ENCODE measurements at regions of chr12 and their contacts with region 1.

Region 1: GRCh38 chr12:111685744-111686517 is at the starts of genes ACAD10 and BRAP:
- DNase-seq: peak; percentile 98
- H3K4me3 ChIP-seq: peak within 1 kb of the TSS; percentile 47 to 85 (median 74)
- H3K27ac ChIP-seq: peak within 1 kb of the TSS; percentile 28
- H3K4me1 ChIP-seq: peaks cover 19% of the 10 kb centered on the region
- H3K27me3 ChIP-seq: no peaks in the 10 kb centered on the region
- CTCF ChIP-seq: no peak
- POLR2A ChIP-seq: peak; percentile 97
- total RNA-seq, gene ACAD10: 14.9 and 16.3 TPM in 2 replicates
- total RNA-seq, gene BRAP: 16.5 and 18.6 TPM in 2 replicates

Region 2: DNA sequence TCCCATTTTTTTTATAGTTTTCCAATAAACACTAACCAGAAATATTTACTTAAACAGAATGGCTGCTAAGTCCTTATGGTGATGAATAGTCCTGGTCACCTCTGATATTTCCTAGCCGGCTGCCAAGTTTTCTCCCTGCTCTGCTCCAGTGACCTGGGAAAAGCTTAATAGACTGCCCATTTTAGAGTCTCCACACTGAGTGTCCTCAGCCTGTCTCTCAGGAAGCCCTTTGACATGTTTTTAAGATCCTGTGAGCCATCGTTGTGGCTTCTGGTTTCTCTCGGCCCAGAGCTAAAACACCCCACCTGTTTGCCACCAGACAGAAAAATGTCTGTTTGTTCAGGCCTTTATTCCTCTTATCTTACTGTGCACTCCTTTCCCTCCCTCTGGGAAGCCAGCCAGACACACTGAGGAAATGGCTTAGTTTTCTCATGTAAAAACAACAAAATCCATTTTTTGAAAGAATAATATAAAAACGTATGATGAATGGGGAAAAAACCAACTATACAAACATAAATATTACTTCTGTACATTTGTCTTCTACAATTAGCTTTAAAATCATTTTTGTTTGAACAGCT is 55.4 kb after region 1 on chr12:
- CTCF ChIA-PET with region 1: no interaction called
- POLR2A ChIA-PET with region 1: no interaction called
- dilution Hi-C with region 1: no loop called
- intact Hi-C with region 1: loop called (anchors 1 kb)
- DNase-seq: peak; percentile 99
- H3K4me3 ChIP-seq: no peak overlapping the region
- H3K27ac ChIP-seq: peak overlapping the region; percentile 72
- H3K4me1 ChIP-seq: peaks cover 24% of the 10 kb centered on the region
- H3K27me3 ChIP-seq: no peaks in the 10 kb centered on the region
- CTCF ChIP-seq: no peak
- POLR2A ChIP-seq: peak; percentile 67

Region 3: GRCh38 chr12:112012775-112013600 is 327.1 kb after region 1 on chr12 and contains the starts of genes ERP29 and TMEM116:
- CTCF ChIA-PET with region 1: no interaction called
- POLR2A ChIA-PET with region 1: no interaction called
- dilution Hi-C with region 1: no loop called
- intact Hi-C with region 1: loop called (anchors 5 kb)
- DNase-seq: peak; percentile 100
- H3K4me3 ChIP-seq: peak within 1 kb of the TSS; percentile 72 to 81 (median 77)
- H3K27ac ChIP-seq: peak within 1 kb of the TSS; percentile 57
- H3K4me1 ChIP-seq: peaks cover 26% of the 10 kb centered on the region
- H3K27me3 ChIP-seq: no peaks in the 10 kb centered on the region
- CTCF ChIP-seq: peak; percentile 42 to 55
- POLR2A ChIP-seq: peak; percentile 99
- total RNA-seq, gene ERP29: 108 and 116 TPM in 2 replicates
- total RNA-seq, gene TMEM116: 1.6 TPM in 2 replicates